ENCODE measurements at regions of chr3 and their contacts with region 1.

Region 1: GRCh38 chr3:185760550-185760949 is 64.3 kb downstream of the IGF2BP2 start:
- DNase-seq: no peak
- ATAC-seq: no peak
- H3K4me3 ChIP-seq: no peak overlapping the region
- H3K4me3 Mint-ChIP-seq: no peak overlapping the region
- H3K27ac ChIP-seq: no peak overlapping the region
- H3K27ac Mint-ChIP-seq: no peak overlapping the region
- H3K4me1 ChIP-seq: no peaks in the 10 kb centered on the region
- H3K4me1 Mint-ChIP-seq: peaks cover 6% of the 10 kb centered on the region
- H3K27me3 ChIP-seq: peaks cover 17 to 25% of the 10 kb centered on the region in 2 experiments
- H3K27me3 Mint-ChIP-seq: peaks cover 42% of the 10 kb centered on the region
- CTCF ChIP-seq: no peak

Region 2: GRCh38 chr3:185717627-185718402 is 42.7 kb before region 1 on chr3:
- CTCF ChIA-PET with region 1: no interaction called
- POLR2A ChIA-PET with region 1: no interaction called
- intact Hi-C with region 1: loop called in 1 of 2 experiments (anchors 1 kb)
- DNase-seq: no peak
- ATAC-seq: no peak
- H3K4me3 ChIP-seq: no peak overlapping the region
- H3K4me3 Mint-ChIP-seq: no peak overlapping the region
- H3K27ac ChIP-seq: no peak overlapping the region
- H3K27ac Mint-ChIP-seq: no peak overlapping the region
- H3K4me1 ChIP-seq: no peaks in the 10 kb centered on the region
- H3K4me1 Mint-ChIP-seq: no peaks in the 10 kb centered on the region
- H3K27me3 ChIP-seq: peaks cover 0 to 3% of the 10 kb centered on the region in 2 experiments
- H3K27me3 Mint-ChIP-seq: peaks cover 11% of the 10 kb centered on the region
- CTCF ChIP-seq: no peak

Region 3: GRCh38 chr3:186400662-186401061 is 640.1 kb after region 1 on chr3:
- CTCF ChIA-PET with region 1: no interaction called
- POLR2A ChIA-PET with region 1: no interaction called
- intact Hi-C with region 1: no loop called
- DNase-seq: no peak
- ATAC-seq: no peak
- H3K4me3 ChIP-seq: no peak overlapping the region
- H3K4me3 Mint-ChIP-seq: no peak overlapping the region
- H3K27ac ChIP-seq: no peak overlapping the region
- H3K27ac Mint-ChIP-seq: no peak overlapping the region
- H3K4me1 ChIP-seq: no peaks in the 10 kb centered on the region
- H3K4me1 Mint-ChIP-seq: no peaks in the 10 kb centered on the region
- H3K27me3 ChIP-seq: no peaks in the 10 kb centered on the region
- H3K27me3 Mint-ChIP-seq: no peaks in the 10 kb centered on the region
- CTCF ChIP-seq: no peak

Measured in CD4-positive, alpha-beta T cell (primary cell).